Vagina (tissue), 2 donors: ENCODE measurements at regions of chr4 and their contacts with region 1.

Region 1: GRCh38 chr4:125244848-125245450 is 69.8 kb upstream of the FAT4 start:
- DNase-seq: no peak
- H3K4me3 ChIP-seq: no peak overlapping the region
- H3K27ac ChIP-seq: no peak overlapping the region
- H3K4me1 ChIP-seq: no peaks in the 10 kb centered on the region
- H3K27me3 ChIP-seq: no peaks in the 10 kb centered on the region
- CTCF ChIP-seq: no peak
- POLR2A ChIP-seq: no peak

Region 2: GRCh38 chr4:123696687-123697086 is 1548.3 kb before region 1 on chr4:
- intact Hi-C with region 1: no loop called
- DNase-seq: no peak
- H3K4me3 ChIP-seq: no peak overlapping the region
- H3K27ac ChIP-seq: no peak overlapping the region
- H3K4me1 ChIP-seq: peaks cover 16% of the 10 kb centered on the region
- H3K27me3 ChIP-seq: no peaks in the 10 kb centered on the region
- CTCF ChIP-seq: no peak
- POLR2A ChIP-seq: no peak

Region 3: DNA sequence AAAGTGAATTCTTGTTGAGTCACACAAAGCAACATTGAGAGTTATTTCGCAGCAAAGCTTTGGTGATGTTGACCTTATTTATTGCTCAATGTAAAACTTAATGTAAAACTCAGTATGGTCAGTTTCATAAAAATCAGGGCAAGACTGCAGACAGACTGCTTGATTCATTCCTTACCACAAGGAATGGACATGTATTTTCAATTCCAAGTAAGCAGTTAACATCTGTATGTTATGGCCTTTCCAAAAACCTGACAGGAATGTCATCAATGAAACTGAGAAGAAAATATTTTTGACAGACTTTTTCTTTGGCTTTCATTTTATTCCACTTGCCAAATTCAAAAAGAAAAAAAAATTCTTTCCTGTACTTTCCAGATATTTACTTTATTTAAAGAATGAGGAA is 1020.7 kb before region 1 on chr4:
- intact Hi-C with region 1: no loop called
- DNase-seq: no peak
- H3K4me3 ChIP-seq: no peak overlapping the region
- H3K27ac ChIP-seq: no peak overlapping the region
- H3K4me1 ChIP-seq: no peaks in the 10 kb centered on the region
- H3K27me3 ChIP-seq: no peaks in the 10 kb centered on the region
- CTCF ChIP-seq: no peak
- POLR2A ChIP-seq: no peak

Region 4: DNA sequence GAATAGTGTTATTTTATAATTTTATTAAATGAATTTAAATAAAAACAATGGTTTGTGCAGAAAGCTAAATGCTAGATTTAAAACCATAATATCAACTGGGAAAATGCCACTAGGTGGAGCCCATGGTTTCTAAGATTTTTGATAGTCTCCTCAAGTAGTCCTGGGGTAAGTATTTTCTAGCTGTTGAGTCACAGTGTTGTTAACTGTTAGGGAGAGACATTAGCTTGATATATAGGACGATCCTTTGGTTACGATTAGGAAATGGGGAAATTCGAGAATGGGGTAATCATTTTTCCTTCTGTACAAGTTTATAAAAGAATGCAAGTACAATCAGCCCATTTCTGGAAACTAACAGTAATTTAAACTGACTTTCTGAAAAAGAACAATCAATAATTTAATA is 910.8 kb before region 1 on chr4:
- intact Hi-C with region 1: loop called (anchors 10 kb)
- DNase-seq: no peak
- H3K4me3 ChIP-seq: no peak overlapping the region
- H3K27ac ChIP-seq: no peak overlapping the region
- H3K4me1 ChIP-seq: no peaks in the 10 kb centered on the region
- H3K27me3 ChIP-seq: no peaks in the 10 kb centered on the region
- CTCF ChIP-seq: peak in 2 of 3 experiments; percentile 39 to 49
- POLR2A ChIP-seq: no peak

Region 5: DNA sequence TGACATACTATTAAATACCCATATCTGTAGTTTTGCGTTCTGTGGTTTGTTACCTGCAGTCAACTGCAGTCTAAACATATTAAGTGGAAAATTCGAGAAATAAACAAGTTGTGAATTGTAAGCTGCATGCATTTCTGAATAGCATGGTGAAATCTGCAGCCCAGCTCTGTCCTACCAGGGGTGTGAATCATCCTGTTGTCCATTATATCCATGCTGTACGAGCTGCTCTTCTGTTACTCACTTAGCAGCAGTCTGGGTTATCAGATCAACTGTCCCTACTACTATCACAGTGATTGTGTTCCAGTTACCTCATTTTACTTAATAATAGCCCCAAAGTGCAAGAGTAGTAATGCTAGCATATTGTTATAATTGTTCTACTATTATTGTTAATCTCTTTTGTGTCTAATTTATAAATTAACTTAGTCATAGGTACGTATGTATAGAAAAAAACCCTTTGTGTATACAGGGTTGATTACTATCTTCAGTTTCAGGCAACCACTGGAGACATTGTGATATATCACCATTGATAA is 103.9 kb before region 1 on chr4:
- intact Hi-C with region 1: no loop called
- DNase-seq: no peak
- H3K4me3 ChIP-seq: no peak overlapping the region
- H3K27ac ChIP-seq: no peak overlapping the region
- H3K4me1 ChIP-seq: no peaks in the 10 kb centered on the region
- H3K27me3 ChIP-seq: no peaks in the 10 kb centered on the region
- CTCF ChIP-seq: no peak
- POLR2A ChIP-seq: no peak

Region 6: GRCh38 chr4:125229596-125230058 is 15.3 kb before region 1 on chr4:
- intact Hi-C with region 1: no loop called
- DNase-seq: no peak
- H3K4me3 ChIP-seq: no peak overlapping the region
- H3K27ac ChIP-seq: no peak overlapping the region
- H3K4me1 ChIP-seq: no peaks in the 10 kb centered on the region
- H3K27me3 ChIP-seq: no peaks in the 10 kb centered on the region
- CTCF ChIP-seq: no peak
- POLR2A ChIP-seq: no peak